Mammary epithelial cell (primary cell): ENCODE measurements at regions of chr15 and their contacts with region 1.

Region 1: GRCh38 chr15:101088788-101089583 is 162.9 kb downstream of the CHSY1 start:
- DNase-seq: peak; percentile 33
- H3K4me3 ChIP-seq: no peak overlapping the region
- H3K27ac ChIP-seq: no peak overlapping the region
- H3K4me1 ChIP-seq: peaks cover 3% of the 10 kb centered on the region
- H3K27me3 ChIP-seq: no peaks in the 10 kb centered on the region
- CTCF ChIP-seq: peak; percentile 93 to 95

Region 2: DNA sequence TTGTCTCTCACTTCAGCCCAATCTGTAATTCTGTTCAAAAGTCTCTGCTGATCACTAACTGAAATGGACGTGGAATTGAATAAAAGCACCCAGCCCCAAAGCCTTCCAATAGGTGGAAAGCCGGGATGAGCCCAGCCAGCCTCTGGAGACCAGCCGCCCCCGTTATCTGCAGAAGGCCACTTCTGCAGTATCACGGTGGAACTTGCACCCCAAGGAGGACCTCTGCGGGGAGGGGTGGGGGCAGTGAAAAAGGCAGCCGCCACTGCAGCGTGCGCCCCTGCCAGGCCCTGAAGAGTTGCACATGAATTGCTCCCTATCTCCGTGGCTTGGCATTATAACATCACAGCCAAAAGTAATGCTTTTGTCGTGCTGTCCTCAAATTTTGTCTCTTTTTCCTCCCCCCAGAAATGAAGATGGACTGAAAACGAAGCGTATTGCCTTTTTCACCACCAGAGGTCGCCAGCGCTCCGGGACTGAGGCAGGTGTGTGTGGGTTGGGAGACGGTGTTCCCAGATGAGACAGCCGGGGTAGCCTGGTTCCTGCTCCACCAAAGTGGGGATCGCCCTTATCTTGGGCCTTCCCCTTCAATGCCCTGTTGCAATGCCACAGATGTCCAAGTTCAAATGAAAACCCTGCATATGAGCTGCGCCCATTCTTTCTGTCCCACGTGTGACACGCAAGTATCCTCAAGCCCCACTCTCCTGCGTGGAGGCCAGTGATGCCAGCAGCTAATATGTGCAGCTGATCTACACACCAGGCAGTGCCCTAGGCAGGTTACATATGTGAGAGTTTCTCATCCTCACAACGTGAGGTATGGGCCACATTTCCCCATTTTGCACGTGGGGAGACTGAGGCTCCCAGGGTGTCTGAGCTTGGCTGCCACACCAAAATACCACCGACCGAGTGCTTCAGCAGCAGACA is 73.8 kb before region 1 on chr15:
- CTCF ChIA-PET with region 1: no interaction called
- dilution Hi-C with region 1: no loop called
- in situ Hi-C with region 1: no loop called
- intact Hi-C with region 1: loop called (anchors 1 kb)
- DNase-seq: peak; percentile 52
- H3K4me3 ChIP-seq: no peak overlapping the region
- H3K27ac ChIP-seq: no peak overlapping the region
- H3K4me1 ChIP-seq: no peaks in the 10 kb centered on the region
- H3K27me3 ChIP-seq: no peaks in the 10 kb centered on the region
- CTCF ChIP-seq: peak; percentile 95 to 96

Region 3: GRCh38 chr15:101027273-101027901 is 61.6 kb before region 1 on chr15:
- CTCF ChIA-PET with region 1: no interaction called
- dilution Hi-C with region 1: loop called (anchors 5 kb)
- in situ Hi-C with region 1: no loop called
- intact Hi-C with region 1: no loop called
- DNase-seq: no peak
- H3K4me3 ChIP-seq: no peak overlapping the region
- H3K27ac ChIP-seq: no peak overlapping the region
- H3K4me1 ChIP-seq: no peaks in the 10 kb centered on the region
- H3K27me3 ChIP-seq: no peaks in the 10 kb centered on the region
- CTCF ChIP-seq: no peak

Region 4: DNA sequence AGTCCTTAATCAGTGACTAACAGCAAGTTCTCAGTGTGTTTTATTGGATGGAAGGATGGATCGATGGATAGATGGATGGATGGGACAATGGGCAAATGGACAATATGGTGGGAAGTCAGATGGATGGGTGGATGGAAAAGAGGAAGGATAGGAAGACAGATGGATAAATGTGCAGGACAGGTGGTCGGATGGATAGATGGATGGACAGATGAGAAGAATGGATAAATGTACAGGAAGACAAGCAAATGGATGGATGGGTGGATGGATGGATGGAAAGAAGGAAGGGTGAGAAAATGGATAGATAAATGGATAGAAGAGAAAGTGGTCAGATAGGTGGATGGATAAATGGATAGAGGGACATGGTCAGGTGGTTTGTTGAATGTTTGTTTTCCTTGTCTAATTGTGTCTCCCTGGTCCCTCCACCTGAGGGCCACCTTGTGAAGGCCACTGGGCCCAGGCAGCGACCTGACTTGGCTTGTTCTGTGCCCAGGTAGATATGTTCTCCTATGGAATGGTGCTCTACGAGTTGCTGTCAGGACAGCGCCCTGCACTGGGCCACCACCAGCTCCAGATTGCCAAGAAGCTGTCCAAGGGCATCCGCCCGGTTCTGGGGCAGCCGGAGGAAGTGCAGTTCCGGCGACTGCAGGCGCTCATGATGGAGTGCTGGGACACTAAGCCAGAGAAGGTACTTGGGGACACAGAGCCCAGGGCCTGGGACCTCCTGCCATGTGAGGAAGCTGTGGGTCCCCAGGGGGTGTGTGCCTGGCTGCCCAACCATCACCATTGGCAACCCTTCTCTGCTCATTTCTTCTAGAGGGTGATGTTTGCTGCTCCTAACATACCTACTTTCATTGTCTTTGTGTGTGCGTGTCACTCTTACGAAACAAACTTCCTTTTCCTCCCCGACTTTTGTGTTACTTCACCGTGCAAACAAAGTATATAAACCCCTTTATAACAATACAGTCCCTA is 32.3 kb before region 1 on chr15:
- CTCF ChIA-PET with region 1: no interaction called
- dilution Hi-C with region 1: loop called (anchors 5 kb)
- in situ Hi-C with region 1: no loop called
- intact Hi-C with region 1: no loop called
- DNase-seq: no peak
- H3K4me3 ChIP-seq: no peak overlapping the region
- H3K27ac ChIP-seq: no peak overlapping the region
- H3K4me1 ChIP-seq: no peaks in the 10 kb centered on the region
- H3K27me3 ChIP-seq: no peaks in the 10 kb centered on the region
- CTCF ChIP-seq: no peak

Region 5: DNA sequence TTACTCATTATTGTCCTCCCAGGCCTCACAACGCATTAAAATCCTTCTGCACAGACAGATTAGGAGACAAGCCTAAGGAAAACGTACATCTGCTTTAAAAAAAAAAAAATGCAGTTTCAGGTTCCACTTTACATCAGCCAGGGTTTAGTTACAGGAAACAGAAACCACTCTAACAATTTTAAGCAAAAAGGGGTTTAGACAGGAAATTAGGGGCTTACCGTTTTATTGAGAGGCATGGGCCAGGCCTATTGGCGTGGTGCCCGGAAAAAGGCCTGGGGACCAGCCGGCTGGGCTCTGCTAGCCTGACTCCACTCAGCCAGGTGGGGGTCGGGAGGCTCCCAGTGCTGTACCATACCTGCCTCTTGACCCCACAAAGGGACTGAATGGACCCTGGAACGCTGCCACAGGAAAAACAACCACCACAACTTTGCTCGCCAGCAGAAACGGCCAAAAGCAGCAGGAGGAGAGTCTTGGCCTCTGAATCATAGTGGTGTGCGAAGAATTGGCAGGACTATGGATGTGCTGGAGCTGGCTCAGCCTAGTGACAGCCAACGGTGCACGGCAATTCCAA is 38.6 kb after region 1 on chr15:
- CTCF ChIA-PET with region 1: no interaction called
- dilution Hi-C with region 1: loop called (anchors 5 kb)
- in situ Hi-C with region 1: no loop called
- intact Hi-C with region 1: no loop called
- DNase-seq: peak; percentile 37
- H3K4me3 ChIP-seq: no peak overlapping the region
- H3K27ac ChIP-seq: peak overlapping the region; percentile 25
- H3K4me1 ChIP-seq: peaks cover 25% of the 10 kb centered on the region
- H3K27me3 ChIP-seq: no peaks in the 10 kb centered on the region
- CTCF ChIP-seq: no peak

Region 6: GRCh38 chr15:101251830-101252820 is 163.1 kb after region 1 on chr15 and contains the start of gene CHSY1:
- CTCF ChIA-PET with region 1: no interaction called
- dilution Hi-C with region 1: loop called (anchors 10 kb)
- in situ Hi-C with region 1: loop called (anchors 5 kb)
- intact Hi-C with region 1: no loop called
- DNase-seq: peak; percentile 91
- H3K4me3 ChIP-seq: peak within 1 kb of the TSS; percentile 70 to 90 (median 76)
- H3K27ac ChIP-seq: peak within 1 kb of the TSS; percentile 67
- H3K4me1 ChIP-seq: peaks cover 24% of the 10 kb centered on the region
- H3K27me3 ChIP-seq: no peaks in the 10 kb centered on the region
- CTCF ChIP-seq: peak in 1 of 2 donors; percentile 30
- total RNA-seq, gene CHSY1: 37.9 to 40.2 TPM

Region 7: DNA sequence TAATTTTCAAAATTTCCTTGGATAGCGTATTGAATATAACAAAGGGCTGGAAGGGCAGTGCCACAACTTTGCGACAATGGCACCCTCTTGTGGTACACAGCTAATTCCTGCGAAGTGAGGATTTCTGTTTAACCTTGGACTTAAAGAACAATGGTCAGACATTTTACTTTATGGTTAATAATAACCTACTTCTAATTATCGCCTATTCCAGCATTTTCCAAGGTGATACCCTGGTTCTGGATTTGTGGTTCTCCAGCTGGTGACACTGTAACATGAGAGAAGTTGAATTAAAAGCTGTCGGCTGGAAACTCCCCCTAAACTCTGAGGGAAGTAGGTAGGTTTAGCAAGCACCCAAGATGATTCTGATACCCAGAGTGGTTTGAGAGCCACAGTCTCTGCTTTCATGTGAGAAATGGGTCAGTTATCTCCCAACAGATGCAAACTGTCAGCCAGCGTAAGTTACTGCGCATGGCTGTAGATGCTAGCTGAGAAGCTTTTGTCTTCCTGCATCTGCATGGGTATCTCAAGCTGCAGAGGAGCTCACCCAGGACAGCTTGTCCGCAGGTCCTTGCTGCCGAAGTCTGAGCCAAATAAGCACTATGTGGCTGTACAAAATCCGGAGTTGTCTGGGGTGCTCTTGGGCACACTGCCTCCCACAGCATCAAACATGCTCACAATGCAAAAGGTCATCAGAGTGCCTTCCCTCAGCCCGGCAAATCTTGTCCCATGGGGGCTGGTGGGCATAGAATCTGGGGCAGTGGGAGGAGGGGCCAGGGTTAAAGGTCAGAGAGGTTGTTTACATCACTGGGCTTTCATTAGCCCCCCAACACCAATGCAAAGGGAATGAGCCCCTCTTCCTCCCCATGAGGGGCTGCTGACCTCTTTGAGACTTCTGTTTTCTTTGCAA is 169.5 kb after region 1 on chr15:
- CTCF ChIA-PET with region 1: no interaction called
- dilution Hi-C with region 1: loop called (anchors 10 kb)
- in situ Hi-C with region 1: loop called (anchors 5 kb)
- intact Hi-C with region 1: loop called (anchors 1 kb)
- DNase-seq: no peak
- H3K4me3 ChIP-seq: no peak overlapping the region
- H3K27ac ChIP-seq: no peak overlapping the region
- H3K4me1 ChIP-seq: no peaks in the 10 kb centered on the region
- H3K27me3 ChIP-seq: no peaks in the 10 kb centered on the region
- CTCF ChIP-seq: peak; percentile 77 to 96